Naive thymus-derived CD8-positive, alpha-beta T cell (primary cell): ENCODE measurements at regions of chr2 and their contacts with region 1.

Region 1: DNA sequence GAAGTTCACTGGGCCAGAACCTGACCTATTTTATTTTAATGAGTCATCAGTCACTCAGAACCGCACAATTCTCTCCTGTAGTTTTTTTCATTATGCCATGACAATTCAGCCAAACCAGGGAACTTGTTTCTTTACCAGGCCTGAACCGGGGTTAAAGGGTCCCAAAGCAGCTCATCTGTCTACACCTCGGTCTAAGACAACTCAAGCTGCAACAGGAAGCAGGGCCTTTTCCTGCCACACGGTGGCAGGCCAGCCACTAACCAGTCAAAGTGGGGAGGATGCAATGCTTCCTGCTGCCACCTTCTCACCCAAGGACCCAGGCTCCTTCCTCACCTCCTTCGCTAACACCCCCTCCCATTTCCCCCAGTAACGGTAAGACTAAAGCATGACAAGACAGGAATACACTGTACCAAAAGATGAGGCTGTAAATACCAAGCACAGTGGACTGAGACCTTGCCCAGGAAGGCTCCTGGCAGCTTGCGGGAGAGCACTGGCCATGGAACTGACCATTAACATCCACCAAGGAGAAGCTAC is 56.7 kb upstream of the ACKR3 start:
- DNase-seq: peak; percentile 49 to 82 (median 66)
- ATAC-seq: peak; percentile 98 to 100
- H3K4me3 Mint-ChIP-seq: no peak overlapping the region
- H3K27ac Mint-ChIP-seq: no peak overlapping the region
- H3K4me1 Mint-ChIP-seq: peaks cover 0 to 3% (median 2%) of the 10 kb centered on the region in 4 donors
- H3K27me3 Mint-ChIP-seq: peaks cover 0 to 9% (median 0%) of the 10 kb centered on the region in 5 donors

Region 2: GRCh38 chr2:236366397-236366796 is 146.6 kb before region 1 on chr2:
- POLR2A ChIA-PET with region 1: no interaction called
- DNase-seq: peak in 6 of 10 donors; percentile 26 to 60 (median 43)
- ATAC-seq: peak; percentile 89 to 97
- H3K4me3 Mint-ChIP-seq: peak overlapping the region; percentile 52 to 85 (median 74)
- H3K27ac Mint-ChIP-seq: peak overlapping the region in 5 of 10 donors; percentile 37 to 76 (median 57)
- H3K4me1 Mint-ChIP-seq: peaks cover 26 to 40% (median 37%) of the 10 kb centered on the region in 4 donors
- H3K27me3 Mint-ChIP-seq: peaks cover 21 to 66% (median 24%) of the 10 kb centered on the region in 5 donors

Region 3: DNA sequence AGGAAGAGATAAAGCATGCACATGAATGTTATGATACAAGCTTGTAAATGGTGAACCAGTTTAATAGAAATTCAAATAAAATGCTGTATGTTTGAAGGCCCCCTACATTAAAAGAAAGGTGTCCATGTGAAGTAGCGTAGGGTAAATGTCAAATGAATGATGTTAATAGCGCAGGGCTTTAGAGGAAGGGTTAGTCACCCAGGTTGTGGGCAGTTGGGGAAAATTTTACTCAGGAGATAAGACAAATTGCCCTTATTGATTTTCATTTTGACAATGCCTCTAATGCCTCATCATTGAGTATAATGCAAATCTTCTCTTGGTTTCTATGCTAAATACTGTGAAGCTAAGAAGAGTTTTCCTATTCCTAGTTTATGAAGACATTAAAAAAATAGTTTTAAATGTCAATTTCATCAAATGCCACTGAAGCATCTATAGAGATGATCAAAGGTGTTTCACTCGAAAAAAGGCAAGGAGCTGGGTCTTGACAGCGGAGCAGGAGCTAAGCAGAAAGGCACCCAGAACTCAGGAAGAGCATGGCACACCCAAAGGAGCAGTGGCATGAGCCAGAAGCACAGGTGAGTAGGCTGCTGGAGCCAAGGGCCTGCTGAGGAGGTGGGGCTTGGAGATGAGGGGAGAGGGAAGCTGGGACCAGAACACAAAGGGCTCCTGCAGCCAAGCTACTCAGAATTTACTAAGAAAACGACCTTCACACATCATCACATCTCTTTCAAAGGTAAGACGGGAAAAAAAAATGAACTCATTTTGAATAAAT is 72.7 kb before region 1 on chr2:
- POLR2A ChIA-PET with region 1: no interaction called
- DNase-seq: no peak
- ATAC-seq: no peak
- H3K4me3 Mint-ChIP-seq: no peak overlapping the region
- H3K27ac Mint-ChIP-seq: peak overlapping the region in 1 of 10 donors; percentile 19
- H3K4me1 Mint-ChIP-seq: no peaks in the 10 kb centered on the region
- H3K27me3 Mint-ChIP-seq: peaks cover 0 to 7% (median 4%) of the 10 kb centered on the region in 5 donors

Region 4: DNA sequence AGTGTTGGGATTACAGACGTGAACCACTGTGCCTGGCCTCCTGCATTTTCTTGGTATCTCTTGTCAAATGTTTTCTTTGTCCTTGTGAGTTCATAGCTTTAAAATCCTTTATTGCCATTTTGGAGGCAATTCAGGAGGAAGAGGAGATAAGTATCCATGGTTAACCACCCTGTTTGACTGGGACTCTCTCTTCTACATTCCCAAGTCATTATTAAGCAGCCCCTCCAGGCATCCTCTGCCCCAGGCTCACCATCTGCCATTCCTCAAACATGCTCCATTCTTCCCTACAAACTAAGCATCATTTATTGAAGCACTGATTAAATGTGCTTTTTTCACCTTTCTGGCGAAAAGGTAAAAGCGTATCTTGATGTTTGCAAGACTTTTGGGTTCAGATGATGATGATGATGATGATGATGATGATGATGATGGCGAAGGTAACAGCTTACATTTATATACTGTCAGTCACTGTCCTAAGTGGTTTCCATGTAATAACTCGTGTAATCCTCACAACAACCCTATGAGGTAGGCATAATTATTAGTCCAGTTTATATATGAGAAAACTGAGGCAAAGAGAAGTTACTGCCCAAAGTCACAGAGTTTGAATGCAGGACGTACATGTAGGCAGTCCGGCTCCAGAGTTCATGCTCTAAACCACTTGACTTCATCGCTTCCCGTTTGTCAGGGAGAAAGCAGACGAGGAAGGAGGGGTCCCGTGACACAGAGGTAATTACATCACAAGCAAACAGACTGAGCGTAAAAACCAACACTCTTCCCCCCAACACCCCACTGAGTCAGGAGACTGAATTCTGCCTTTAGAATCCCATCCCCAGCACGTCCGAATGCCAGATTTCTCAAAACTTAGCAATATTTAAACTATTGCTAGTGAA is 13.0 kb before region 1 on chr2:
- POLR2A ChIA-PET with region 1: no interaction called
- DNase-seq: no peak
- ATAC-seq: no peak
- H3K4me3 Mint-ChIP-seq: no peak overlapping the region
- H3K27ac Mint-ChIP-seq: no peak overlapping the region
- H3K4me1 Mint-ChIP-seq: peaks cover 0 to 2% (median 0%) of the 10 kb centered on the region in 4 donors
- H3K27me3 Mint-ChIP-seq: peaks cover 0 to 7% (median 6%) of the 10 kb centered on the region in 5 donors

Region 5: DNA sequence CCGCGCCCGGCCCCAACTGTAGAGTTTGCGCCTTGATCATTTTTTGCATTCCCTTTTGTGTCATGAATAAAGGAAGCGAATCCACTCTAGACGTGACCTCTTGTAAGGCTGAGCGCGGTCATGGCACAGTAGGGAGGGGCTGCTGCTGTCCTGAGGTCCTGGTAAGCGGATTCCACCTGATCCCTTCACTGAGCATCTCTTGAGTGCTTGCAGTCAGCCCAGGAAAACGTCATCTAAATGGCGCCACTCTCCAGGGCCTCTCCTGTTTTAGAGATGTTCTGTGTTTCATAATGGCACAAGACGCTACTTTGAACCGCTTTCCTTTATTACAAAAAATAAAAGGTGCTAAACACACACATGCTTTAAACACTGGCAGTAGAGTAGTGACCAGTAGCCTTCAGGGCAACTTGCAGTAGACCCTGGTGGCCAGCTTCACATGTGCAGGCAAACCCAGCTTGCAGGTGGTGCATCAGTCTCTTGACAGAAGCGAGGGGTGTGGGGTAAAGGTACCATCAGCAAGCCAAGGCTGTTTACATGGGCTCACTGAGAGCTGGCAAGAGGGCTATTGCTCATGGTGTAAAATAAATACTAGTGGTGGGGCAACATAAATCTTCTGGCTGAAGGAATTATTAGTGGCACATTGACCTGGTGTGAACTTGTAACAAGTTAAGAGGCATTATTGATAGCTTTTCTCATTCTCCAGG is 13.6 kb after region 1 on chr2:
- POLR2A ChIA-PET with region 1: no interaction called
- DNase-seq: no peak
- ATAC-seq: no peak
- H3K4me3 Mint-ChIP-seq: no peak overlapping the region
- H3K27ac Mint-ChIP-seq: peak overlapping the region in 1 of 10 donors; percentile 15
- H3K4me1 Mint-ChIP-seq: peaks cover 0 to 3% (median 3%) of the 10 kb centered on the region in 4 donors
- H3K27me3 Mint-ChIP-seq: peaks cover 0 to 5% (median 2%) of the 10 kb centered on the region in 5 donors

Region 6: GRCh38 chr2:236569573-236569973 is 56.6 kb after region 1 on chr2 and contains the start of gene ACKR3:
- POLR2A ChIA-PET with region 1: interaction called, 48 read pairs
- DNase-seq: peak; percentile 54 to 91 (median 78)
- ATAC-seq: peak; percentile 95 to 96
- H3K4me3 Mint-ChIP-seq: peak within 1 kb of the TSS; percentile 70 to 90 (median 87)
- H3K27ac Mint-ChIP-seq: peak within 1 kb of the TSS; percentile 6 to 84 (median 62)
- H3K4me1 Mint-ChIP-seq: peaks cover 18 to 42% (median 32%) of the 10 kb centered on the region in 4 donors
- H3K27me3 Mint-ChIP-seq: no peaks in the 10 kb centered on the region
- polyA plus RNA-seq, gene ACKR3: 2.4 to 5.6 (median 4.2) TPM